CD8-positive, alpha-beta T cell (primary cell): ENCODE measurements at regions of chrX and their contacts with region 1.

Region 1: DNA sequence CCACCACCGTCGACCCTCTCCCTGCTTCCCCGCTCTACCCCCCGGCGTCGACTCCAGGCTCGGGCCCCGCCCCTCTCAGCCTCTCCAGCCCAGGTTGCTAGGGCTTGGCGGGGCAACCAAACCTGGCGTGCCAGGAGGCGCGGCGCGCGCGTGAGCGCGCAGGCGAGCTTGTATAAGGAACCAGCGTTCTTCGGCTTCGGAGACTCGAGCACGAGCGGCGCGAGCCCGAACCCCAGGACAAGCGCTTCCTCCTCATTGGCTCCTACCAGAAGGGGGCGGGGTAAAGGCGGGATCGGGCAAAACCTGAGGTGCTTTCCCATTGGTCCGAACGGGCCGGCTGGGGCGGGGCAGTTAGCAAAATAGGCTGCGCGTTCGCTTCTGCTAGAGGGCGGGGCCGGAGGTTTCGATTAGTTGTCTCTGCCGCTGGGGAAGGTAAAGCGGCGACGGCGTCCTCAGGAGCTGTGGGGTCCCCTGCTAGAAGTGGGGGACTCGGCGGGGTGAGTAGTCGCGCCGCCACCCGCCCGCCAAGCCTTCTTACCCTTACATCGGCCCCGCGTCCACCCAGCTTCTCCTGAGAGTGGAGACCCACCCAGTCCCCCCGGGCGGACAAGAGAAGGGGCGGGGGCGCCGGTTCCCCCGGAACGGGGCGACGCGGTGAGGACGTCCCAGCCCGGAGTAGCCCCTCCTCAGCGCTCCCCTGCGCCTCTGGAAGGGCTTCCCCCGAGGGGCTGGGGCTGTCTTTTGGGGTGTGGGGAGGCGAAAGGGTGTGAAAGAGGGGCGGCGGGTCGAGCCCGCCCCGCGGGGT is at the start of gene CDKL5:
- DNase-seq: peak; percentile 90 to 98 (median 95)
- ATAC-seq: peak; percentile 91
- H3K4me3 ChIP-seq: peak within 1 kb of the TSS; percentile 77 to 83
- H3K4me3 Mint-ChIP-seq: peak within 1 kb of the TSS; percentile 91
- H3K27ac ChIP-seq: peak within 1 kb of the TSS; percentile 73 to 80
- H3K27ac Mint-ChIP-seq: peak within 1 kb of the TSS; percentile 90
- H3K4me1 ChIP-seq: no peaks in the 10 kb centered on the region
- H3K4me1 Mint-ChIP-seq: peaks cover 10% of the 10 kb centered on the region
- H3K27me3 ChIP-seq: no peaks in the 10 kb centered on the region
- H3K27me3 Mint-ChIP-seq: peaks cover 2% of the 10 kb centered on the region
- CTCF ChIP-seq: no peak
- total RNA-seq, gene CDKL5: 0.78 to 2.5 TPM

Region 2: DNA sequence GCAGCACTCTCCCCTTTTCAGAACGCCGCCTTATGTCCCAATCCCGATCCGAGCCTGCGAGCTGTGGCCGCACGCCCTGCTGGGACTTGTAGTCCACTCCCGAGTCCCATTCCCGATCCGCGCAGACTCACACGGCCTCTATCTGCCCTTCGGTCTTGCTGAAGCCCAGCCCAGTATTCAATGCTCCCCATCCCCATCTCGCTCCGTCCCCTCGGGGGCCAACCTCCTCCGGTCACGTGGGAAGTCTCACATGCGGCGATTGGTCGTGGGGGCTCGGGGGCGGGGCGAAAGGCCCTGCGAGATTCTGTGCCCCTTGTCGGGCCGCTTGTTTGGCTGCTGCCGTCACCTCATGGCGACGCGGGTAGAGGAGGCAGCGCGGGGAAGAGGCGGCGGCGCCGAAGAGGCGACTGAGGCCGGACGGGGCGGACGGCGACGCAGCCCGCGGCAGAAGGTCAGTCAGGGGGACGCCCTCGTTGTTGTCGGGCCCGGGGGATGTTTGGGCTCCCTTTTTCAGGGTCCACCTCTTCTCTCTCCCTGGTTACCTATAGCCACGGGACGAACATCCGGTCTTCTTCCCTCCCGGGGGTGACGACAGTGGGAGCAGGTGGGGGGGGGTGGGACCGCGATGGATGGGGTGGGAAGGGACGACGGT is 1639.1 kb before region 1 on chrX and contains the start of gene TXLNG:
- CTCF ChIA-PET with region 1: no interaction called
- POLR2A ChIA-PET with region 1: no interaction called
- intact Hi-C with region 1: loop called in 1 of 2 experiments (anchors 5 kb)
- DNase-seq: peak; percentile 83 to 98 (median 94)
- ATAC-seq: peak; percentile 91
- H3K4me3 ChIP-seq: peak within 1 kb of the TSS; percentile 54 to 68
- H3K4me3 Mint-ChIP-seq: peak within 1 kb of the TSS; percentile 96
- H3K27ac ChIP-seq: peak within 1 kb of the TSS; percentile 88 to 91
- H3K27ac Mint-ChIP-seq: peak within 1 kb of the TSS; percentile 87
- H3K4me1 ChIP-seq: peaks cover 4% of the 10 kb centered on the region
- H3K4me1 Mint-ChIP-seq: peaks cover 25% of the 10 kb centered on the region
- H3K27me3 ChIP-seq: no peaks in the 10 kb centered on the region
- H3K27me3 Mint-ChIP-seq: no peaks in the 10 kb centered on the region
- CTCF ChIP-seq: no peak
- total RNA-seq, gene TXLNG: 31.3 to 32.3 TPM

Region 3: DNA sequence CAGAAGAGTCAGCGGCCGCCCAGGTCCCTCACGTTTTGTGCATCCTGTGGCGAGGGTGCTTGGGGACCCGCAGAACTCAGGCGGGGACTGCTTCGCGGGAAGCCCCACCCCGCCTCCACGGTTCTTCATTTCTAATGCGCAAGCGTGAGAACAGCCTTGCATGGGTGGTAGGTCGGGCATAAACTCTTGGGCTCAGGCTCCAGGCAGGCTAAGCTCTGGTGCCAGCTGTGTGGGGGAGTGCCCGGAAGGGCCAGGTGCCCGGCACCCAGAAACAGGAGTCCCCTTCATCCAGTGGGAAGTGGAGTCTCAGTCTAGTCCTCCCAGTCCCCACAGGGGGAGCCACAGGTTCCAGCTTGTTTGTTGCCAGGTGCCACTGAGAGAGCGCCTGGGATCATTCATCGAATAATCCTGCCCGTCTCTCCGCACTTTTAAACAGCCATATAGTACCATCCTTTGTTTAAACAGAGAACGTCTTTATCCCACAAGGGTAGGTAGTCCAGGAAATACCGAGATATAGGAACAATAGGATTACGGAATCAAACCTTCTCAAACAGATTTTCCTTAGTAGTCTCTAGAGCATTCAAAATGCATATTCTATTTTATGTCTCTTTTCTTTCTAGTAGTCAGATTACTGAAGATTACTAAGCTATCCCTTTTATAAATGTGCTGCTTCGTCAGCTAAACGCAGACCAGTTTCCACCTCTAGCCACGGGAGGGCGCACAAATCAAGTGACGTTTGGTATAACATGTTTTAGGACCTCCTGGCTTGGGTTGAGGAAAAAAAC is 1542.5 kb before region 1 on chrX:
- CTCF ChIA-PET with region 1: no interaction called
- POLR2A ChIA-PET with region 1: no interaction called
- intact Hi-C with region 1: loop called in 1 of 2 experiments (anchors 5 kb)
- DNase-seq: peak; percentile 44 to 79 (median 71)
- ATAC-seq: peak; percentile 81
- H3K4me3 ChIP-seq: peak overlapping the region; percentile 56 to 72
- H3K4me3 Mint-ChIP-seq: peak overlapping the region; percentile 79
- H3K27ac ChIP-seq: peak overlapping the region; percentile 45 to 66
- H3K27ac Mint-ChIP-seq: peak overlapping the region; percentile 83
- H3K4me1 ChIP-seq: peaks cover 3% of the 10 kb centered on the region
- H3K4me1 Mint-ChIP-seq: peaks cover 9% of the 10 kb centered on the region
- H3K27me3 ChIP-seq: no peaks in the 10 kb centered on the region
- H3K27me3 Mint-ChIP-seq: no peaks in the 10 kb centered on the region
- CTCF ChIP-seq: peak; percentile 70

Region 4: DNA sequence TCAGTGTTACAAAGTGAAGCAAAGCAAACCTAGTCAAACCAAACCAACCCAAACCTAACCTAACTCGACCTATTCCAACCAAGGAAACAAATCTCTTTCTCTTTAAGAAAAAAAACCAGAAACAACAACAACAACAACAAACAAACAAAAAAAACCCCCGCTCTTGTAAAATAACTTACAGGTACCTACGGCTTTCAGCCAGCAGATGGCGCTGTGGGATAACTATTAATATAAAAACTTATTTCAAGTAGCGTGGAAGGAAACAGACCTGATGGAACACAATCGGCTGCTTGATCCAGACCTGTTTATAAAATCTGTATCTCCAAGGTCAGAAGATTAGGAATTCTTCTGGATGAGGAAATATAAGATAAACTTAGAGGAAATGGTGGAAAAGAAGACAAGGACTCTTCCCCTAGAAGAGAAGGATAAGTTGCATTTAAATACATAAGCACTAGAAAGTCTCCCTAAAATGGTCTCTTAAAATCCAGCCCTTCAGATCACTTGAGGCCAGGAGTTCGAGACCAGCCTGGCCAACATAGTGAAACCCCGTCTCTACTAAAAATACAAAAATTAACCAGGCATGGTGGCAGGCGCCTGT is 34.4 kb before region 1 on chrX:
- CTCF ChIA-PET with region 1: interaction called, 3 read pairs
- POLR2A ChIA-PET with region 1: no interaction called
- intact Hi-C with region 1: loop called in 1 of 2 experiments (anchors 2 kb)
- DNase-seq: peak; percentile 16 to 80 (median 65)
- ATAC-seq: peak; percentile 42
- H3K4me3 ChIP-seq: no peak overlapping the region
- H3K4me3 Mint-ChIP-seq: no peak overlapping the region
- H3K27ac ChIP-seq: no peak overlapping the region
- H3K27ac Mint-ChIP-seq: no peak overlapping the region
- H3K4me1 ChIP-seq: no peaks in the 10 kb centered on the region
- H3K4me1 Mint-ChIP-seq: peaks cover 2% of the 10 kb centered on the region
- H3K27me3 ChIP-seq: no peaks in the 10 kb centered on the region
- H3K27me3 Mint-ChIP-seq: no peaks in the 10 kb centered on the region
- CTCF ChIP-seq: peak; percentile 64

Region 5: GRCh38 chrX:18886344-18887161 is 461.2 kb after region 1 on chrX:
- CTCF ChIA-PET with region 1: no interaction called
- POLR2A ChIA-PET with region 1: no interaction called
- intact Hi-C with region 1: loop called in 1 of 2 experiments (anchors 2 kb)
- DNase-seq: peak; percentile 2 to 67 (median 31)
- ATAC-seq: peak; percentile 47
- H3K4me3 ChIP-seq: peak overlapping the region; percentile 58 to 64
- H3K4me3 Mint-ChIP-seq: peak overlapping the region; percentile 88
- H3K27ac ChIP-seq: peak overlapping the region; percentile 14 to 69
- H3K27ac Mint-ChIP-seq: peak overlapping the region; percentile 91
- H3K4me1 ChIP-seq: peaks cover 27% of the 10 kb centered on the region
- H3K4me1 Mint-ChIP-seq: peaks cover 33% of the 10 kb centered on the region
- H3K27me3 ChIP-seq: no peaks in the 10 kb centered on the region
- H3K27me3 Mint-ChIP-seq: no peaks in the 10 kb centered on the region
- CTCF ChIP-seq: peak; percentile 33

Region 6: DNA sequence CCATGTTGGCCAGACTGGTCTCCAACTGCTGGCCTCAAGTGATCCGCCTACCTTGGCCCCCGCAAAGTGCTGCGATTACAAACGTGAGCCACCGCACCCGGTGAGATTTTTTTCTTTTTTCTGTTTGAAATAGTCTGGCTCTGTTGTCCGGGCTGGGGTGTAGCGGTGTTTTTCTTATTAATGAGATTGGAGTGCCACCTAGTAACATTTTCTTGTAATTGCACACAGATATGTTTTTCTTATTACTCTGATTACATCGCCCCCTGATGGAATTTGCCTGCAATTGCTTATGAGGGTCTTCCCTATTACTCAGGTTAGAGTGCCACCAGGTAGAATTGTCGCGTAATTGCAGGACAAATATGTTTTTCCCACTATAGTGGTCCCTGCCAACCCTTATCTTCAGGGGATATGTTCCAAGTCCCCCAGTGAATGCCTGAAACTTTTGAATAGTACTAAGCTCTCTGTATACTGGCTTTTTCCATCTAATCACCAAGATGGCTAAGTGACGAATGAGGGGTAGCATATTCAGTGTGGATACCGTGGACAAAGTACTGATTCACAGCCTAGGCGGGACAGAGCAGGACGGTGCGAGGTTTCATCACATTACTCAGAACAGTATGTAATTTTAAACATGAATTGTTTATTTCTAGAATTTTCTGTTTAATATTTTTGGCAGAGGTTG is 909.7 kb after region 1 on chrX:
- CTCF ChIA-PET with region 1: no interaction called
- POLR2A ChIA-PET with region 1: no interaction called
- intact Hi-C with region 1: loop called in 1 of 2 experiments (anchors 1 kb)
- DNase-seq: peak in 3 of 9 experiments; percentile 21 to 53 (median 39)
- ATAC-seq: peak; percentile 21
- H3K4me3 ChIP-seq: no peak overlapping the region
- H3K4me3 Mint-ChIP-seq: no peak overlapping the region
- H3K27ac ChIP-seq: no peak overlapping the region
- H3K27ac Mint-ChIP-seq: no peak overlapping the region
- H3K4me1 ChIP-seq: no peaks in the 10 kb centered on the region
- H3K4me1 Mint-ChIP-seq: no peaks in the 10 kb centered on the region
- H3K27me3 ChIP-seq: no peaks in the 10 kb centered on the region
- H3K27me3 Mint-ChIP-seq: no peaks in the 10 kb centered on the region
- CTCF ChIP-seq: no peak

Region 7: GRCh38 chrX:19791562-19791961 is 1366.2 kb after region 1 on chrX:
- CTCF ChIA-PET with region 1: no interaction called
- POLR2A ChIA-PET with region 1: no interaction called
- intact Hi-C with region 1: no loop called
- DNase-seq: peak in 2 of 9 experiments; percentile 55 to 69
- ATAC-seq: peak; percentile 79
- H3K4me3 ChIP-seq: no peak overlapping the region
- H3K4me3 Mint-ChIP-seq: peak overlapping the region; percentile 61
- H3K27ac ChIP-seq: no peak overlapping the region
- H3K27ac Mint-ChIP-seq: peak overlapping the region; percentile 77
- H3K4me1 ChIP-seq: peaks cover 59% of the 10 kb centered on the region
- H3K4me1 Mint-ChIP-seq: peaks cover 70% of the 10 kb centered on the region
- H3K27me3 ChIP-seq: no peaks in the 10 kb centered on the region
- H3K27me3 Mint-ChIP-seq: no peaks in the 10 kb centered on the region
- CTCF ChIP-seq: no peak